Adrenal gland (tissue), 19 donors: ENCODE measurements at regions of chr22 and their contacts with region 1.

Region 1: DNA sequence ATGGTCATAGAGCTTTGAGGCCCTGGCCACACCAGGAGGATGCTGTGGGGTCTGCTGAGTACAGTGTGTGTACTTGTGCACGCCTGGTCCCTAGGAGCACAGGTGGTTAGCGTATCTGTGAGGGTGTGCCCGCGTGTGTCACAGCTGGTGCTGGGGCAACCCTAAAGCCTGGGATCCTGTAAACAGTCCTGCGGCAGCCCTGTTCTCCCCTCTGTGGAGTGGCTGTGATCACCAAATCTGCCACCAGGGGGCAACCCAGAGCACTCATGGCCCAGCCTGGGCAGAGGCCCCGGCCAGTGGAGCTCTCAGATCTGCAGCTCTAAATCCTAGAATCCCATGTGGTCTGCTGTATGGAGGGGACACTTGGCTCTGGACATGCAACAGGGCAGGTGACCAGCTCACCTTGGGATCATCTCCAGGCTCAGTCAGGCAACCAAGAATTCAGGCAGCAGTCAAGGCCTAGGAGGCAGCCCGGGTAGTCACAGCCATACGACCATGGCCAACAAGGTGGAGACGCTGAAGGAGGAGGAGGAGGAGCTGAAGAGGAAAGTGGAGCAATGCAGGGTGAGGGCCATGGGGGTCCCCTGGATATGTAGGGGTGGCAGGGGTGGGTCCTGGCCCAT is 3.9 kb downstream of the SH3BP1 start:
- DNase-seq: peak; percentile 77 to 94 (median 89)
- H3K4me3 ChIP-seq: no peak overlapping the region
- H3K27ac ChIP-seq: no peak overlapping the region
- H3K4me1 ChIP-seq: peaks cover 0 to 38% of the 10 kb centered on the region in 2 donors
- H3K27me3 ChIP-seq: no peaks in the 10 kb centered on the region
- CTCF ChIP-seq: peak; percentile 80 to 95 (median 92)
- POLR2A ChIP-seq: no peak

Region 2: GRCh38 chr22:37472418-37473006 is 170.8 kb before region 1 on chr22:
- intact Hi-C with region 1: no loop called
- DNase-seq: peak in 4 of 7 donors; percentile 36 to 60 (median 50)
- H3K4me3 ChIP-seq: no peak overlapping the region
- H3K27ac ChIP-seq: no peak overlapping the region
- H3K4me1 ChIP-seq: no peaks in the 10 kb centered on the region
- H3K27me3 ChIP-seq: no peaks in the 10 kb centered on the region
- CTCF ChIP-seq: peak; percentile 28 to 59 (median 50)
- POLR2A ChIP-seq: no peak

Region 3: GRCh38 chr22:37519268-37520195 is 123.8 kb before region 1 on chr22 and contains the start of gene CARD10:
- intact Hi-C with region 1: no loop called
- DNase-seq: peak in 1 of 7 donors; percentile 38
- H3K4me3 ChIP-seq: peak within 1 kb of the TSS in 2 of 4 donors; percentile 18 to 86
- H3K27ac ChIP-seq: peak within 1 kb of the TSS in 3 of 5 donors; percentile 41 to 66 (median 42)
- H3K4me1 ChIP-seq: peaks cover 5% of the 10 kb centered on the region in 2 donors
- H3K27me3 ChIP-seq: no peaks in the 10 kb centered on the region
- CTCF ChIP-seq: no peak
- POLR2A ChIP-seq: peak in 1 of 2 donors; percentile 15
- total RNA-seq, gene CARD10: 3.3 to 34.2 (median 20.5) TPM

Region 4: DNA sequence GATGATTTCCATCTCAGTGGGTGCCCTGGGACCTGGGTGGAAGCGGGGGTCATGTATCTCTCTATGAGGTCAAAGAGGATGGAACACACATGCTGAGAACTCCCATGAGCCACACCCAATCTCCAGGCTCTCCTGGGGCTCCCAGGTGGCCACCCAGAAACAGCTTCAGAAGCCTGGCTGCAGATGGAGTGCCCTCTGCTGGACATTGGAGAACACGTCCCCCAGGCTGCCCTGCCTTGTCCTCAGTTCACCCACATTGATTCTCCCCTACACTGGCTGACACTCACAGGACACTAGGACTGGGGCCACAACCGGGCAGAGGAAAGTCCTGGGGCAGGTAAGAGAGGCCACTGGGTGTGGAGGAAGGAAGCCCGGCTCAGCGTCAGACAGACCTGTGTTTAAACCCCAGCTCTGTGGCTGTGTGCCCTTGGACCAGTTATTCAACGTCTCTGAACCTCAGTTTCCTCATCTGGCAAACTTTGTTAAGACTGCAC is 38.3 kb after region 1 on chr22:
- intact Hi-C with region 1: loop called (anchors 5 kb)
- DNase-seq: peak; percentile 71 to 93 (median 84)
- H3K4me3 ChIP-seq: no peak overlapping the region
- H3K27ac ChIP-seq: no peak overlapping the region
- H3K4me1 ChIP-seq: peaks cover 4 to 11% of the 10 kb centered on the region in 2 donors
- H3K27me3 ChIP-seq: no peaks in the 10 kb centered on the region
- CTCF ChIP-seq: peak; percentile 83 to 93 (median 91)
- POLR2A ChIP-seq: no peak

Region 5: DNA sequence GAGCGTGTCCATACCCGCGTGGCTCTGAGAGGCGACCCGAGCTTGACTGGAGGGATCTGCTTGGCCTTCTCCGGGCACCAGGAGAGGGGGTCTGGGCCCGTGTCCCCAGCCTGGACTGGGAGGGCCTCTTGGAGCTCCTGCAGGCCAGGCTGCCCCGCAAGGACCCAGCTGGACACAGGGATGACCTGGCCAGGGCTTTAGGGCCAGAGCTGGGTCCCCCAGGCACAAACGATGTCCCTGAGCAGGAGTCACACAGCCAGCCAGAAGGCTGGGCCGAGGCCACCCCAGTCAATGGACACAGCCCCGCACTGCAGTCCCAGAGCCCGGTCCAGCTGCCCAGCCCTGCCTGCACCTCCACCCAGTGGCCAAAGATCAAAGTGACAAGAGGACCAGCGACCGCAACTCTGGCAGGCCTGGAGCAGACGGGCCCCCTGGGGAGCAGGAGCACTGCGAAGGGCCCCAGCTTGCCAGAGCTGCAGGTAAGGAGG is 91.7 kb after region 1 on chr22:
- intact Hi-C with region 1: loop called in 1 of 2 experiments (anchors 5 kb)
- DNase-seq: peak in 6 of 7 donors; percentile 80 to 86 (median 83)
- H3K4me3 ChIP-seq: no peak overlapping the region
- H3K27ac ChIP-seq: peak overlapping the region in 2 of 5 donors; percentile 5 to 60
- H3K4me1 ChIP-seq: no peaks in the 10 kb centered on the region
- H3K27me3 ChIP-seq: no peaks in the 10 kb centered on the region
- CTCF ChIP-seq: peak; percentile 42 to 78 (median 64)
- POLR2A ChIP-seq: no peak

Region 6: GRCh38 chr22:37797874-37798500 is 154.7 kb after region 1 on chr22:
- intact Hi-C with region 1: loop called in 1 of 2 experiments (anchors 10 kb)
- DNase-seq: no peak
- H3K4me3 ChIP-seq: no peak overlapping the region
- H3K27ac ChIP-seq: no peak overlapping the region
- H3K4me1 ChIP-seq: peaks cover 4 to 8% of the 10 kb centered on the region in 2 donors
- H3K27me3 ChIP-seq: no peaks in the 10 kb centered on the region
- CTCF ChIP-seq: no peak
- POLR2A ChIP-seq: no peak

Region 7: DNA sequence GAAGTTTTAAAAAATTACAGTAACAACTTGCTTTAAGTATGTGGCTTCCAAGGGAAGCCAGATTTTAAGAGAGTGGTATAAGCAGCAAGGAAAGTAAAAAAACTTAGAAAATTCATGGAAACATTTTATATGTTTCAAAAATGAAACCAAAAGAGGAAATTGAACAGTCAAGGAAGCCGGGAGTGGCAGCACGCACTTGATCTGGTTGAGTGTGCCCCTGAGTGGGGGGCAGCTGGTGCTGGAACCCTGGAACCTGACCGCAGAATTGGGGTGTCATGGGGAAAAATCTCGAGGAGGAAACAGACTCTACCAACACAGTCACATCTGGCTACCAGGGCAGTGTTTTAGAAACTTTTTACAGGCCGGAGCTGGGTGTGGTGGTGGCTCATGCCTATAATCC is 276.8 kb after region 1 on chr22:
- intact Hi-C with region 1: no loop called
- DNase-seq: no peak
- H3K4me3 ChIP-seq: no peak overlapping the region
- H3K27ac ChIP-seq: no peak overlapping the region
- H3K4me1 ChIP-seq: no peaks in the 10 kb centered on the region
- H3K27me3 ChIP-seq: no peaks in the 10 kb centered on the region
- CTCF ChIP-seq: no peak
- POLR2A ChIP-seq: no peak